ENCODE measurements at regions of chr19 and their contacts with region 1.

Region 1: GRCh38 chr19:10194500-10195289 is at the start of gene DNMT1:
- DNase-seq: peak; percentile 95
- H3K4me3 ChIP-seq: peak within 1 kb of the TSS; percentile 86 to 96 (median 94)
- H3K27ac ChIP-seq: peak within 1 kb of the TSS; percentile 70
- H3K4me1 ChIP-seq: peaks cover 7% of the 10 kb centered on the region
- H3K27me3 ChIP-seq: no peaks in the 10 kb centered on the region
- CTCF ChIP-seq: no peak
- total RNA-seq, gene DNMT1: 23.0 to 139 TPM

Region 2: DNA sequence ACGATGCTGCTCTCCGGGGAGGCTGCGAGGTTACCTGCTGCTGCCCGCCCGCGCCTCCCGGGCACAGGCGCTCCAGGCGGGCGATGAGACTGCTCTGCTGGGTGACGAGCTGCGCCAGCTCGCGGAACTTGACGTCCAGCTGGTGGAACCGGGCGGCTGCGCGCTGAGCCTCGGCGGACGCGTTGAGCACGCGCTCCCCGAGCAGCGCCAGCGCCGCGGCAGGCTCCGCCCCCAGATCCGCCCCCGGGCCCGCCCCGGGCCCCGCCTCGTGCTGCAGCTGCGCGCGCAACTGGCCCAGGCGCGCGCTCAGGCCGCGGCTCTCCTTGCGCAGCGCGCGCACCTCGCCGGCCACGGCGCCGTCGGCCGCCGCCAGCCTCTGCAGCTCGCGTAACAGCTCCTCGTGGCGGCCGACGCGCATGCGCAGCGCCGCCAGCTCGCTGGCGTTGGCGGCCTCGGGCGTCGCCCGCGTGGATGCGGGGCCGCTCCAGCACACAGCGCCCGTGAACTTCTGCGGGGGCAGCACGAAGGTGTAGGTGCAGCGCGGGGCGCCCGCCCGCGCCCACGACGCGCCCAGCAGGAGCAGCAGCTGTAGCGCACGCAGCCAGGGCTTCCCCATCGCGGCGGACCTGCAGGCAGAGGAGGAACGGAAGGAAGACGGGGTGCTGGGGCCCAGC is 98.6 kb before region 1 on chr19:
- CTCF ChIA-PET with region 1: no interaction called
- dilution Hi-C with region 1: no loop called
- in situ Hi-C with region 1: no loop called
- intact Hi-C with region 1: no loop called
- DNase-seq: peak; percentile 87
- H3K4me3 ChIP-seq: peak overlapping the region; percentile 43 to 55 (median 53)
- H3K27ac ChIP-seq: peak overlapping the region; percentile 3
- H3K4me1 ChIP-seq: peaks cover 13% of the 10 kb centered on the region
- H3K27me3 ChIP-seq: no peaks in the 10 kb centered on the region
- CTCF ChIP-seq: no peak

Region 3: DNA sequence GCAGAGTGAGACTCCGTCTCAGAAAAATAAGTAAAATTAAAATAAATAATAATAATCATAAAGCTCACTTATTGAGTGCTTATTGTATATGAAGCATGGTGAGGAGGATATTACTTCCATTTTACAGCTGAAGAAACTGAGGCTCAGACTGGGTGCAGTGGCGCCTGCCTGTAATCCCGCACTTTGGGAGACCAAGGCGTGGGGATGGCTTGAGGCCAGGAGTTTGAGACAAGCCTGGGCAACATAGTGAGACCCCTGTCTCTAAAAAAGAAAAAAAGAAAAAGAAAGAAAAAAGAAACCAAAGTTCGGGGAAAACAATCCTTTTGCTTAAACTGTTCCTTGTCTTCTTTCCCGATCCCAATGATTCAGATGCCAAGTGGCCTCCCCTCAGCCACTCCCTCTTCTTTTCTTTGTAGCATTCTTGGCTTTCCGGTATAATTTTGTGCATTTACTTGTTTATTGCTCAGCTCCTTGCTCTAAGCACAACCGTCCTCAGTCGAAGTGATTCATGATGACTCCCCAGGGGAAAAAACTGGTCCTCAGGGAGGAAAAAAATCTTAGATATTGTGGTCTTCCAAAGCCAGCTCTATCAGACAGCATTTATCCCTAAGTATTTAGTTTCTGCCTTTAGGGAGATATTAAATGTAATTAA is 74.0 kb before region 1 on chr19:
- CTCF ChIA-PET with region 1: no interaction called
- dilution Hi-C with region 1: no loop called
- in situ Hi-C with region 1: no loop called
- intact Hi-C with region 1: no loop called
- DNase-seq: peak; percentile 88
- H3K4me3 ChIP-seq: no peak overlapping the region
- H3K27ac ChIP-seq: no peak overlapping the region
- H3K4me1 ChIP-seq: peaks cover 5% of the 10 kb centered on the region
- H3K27me3 ChIP-seq: no peaks in the 10 kb centered on the region
- CTCF ChIP-seq: no peak

Region 4: DNA sequence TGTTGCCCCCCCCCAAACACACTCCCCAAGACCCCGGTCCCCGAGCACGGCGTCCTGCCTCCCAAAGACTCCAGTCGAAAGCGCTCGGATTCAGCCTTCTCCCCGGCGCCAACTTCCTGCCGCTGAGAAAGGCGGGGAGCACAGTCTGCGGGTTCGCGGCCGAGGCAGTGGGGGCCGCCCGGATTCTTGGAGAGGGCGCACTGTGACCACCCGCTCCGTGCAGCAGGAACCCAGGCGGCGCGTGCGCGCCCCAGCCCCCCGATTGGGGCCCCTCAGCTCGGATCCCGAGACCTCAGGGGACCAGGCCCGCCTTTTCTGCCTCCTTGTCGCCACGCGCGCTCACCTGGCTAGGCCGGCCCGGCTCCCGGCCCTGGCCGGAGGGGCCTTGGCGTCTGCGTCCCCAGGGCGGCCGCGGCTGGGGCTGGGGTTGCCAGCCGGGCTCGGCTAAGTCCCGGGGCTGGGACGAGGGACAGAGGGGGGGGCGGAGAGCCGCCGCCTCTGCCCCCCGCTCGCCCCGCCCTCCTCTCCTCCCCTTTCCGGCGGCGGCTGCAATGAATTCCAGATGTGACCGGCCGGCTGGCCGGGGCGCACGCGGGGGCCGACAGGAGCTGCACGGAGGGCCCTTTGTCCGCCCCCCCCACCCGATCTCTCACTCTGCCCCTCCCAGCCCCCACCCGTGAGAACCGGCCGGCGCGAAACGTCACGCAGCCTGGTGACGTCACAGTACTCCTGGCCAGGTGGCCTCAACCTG is 36.3 kb after region 1 on chr19 and contains the start of gene S1PR2:
- CTCF ChIA-PET with region 1: no interaction called
- dilution Hi-C with region 1: no loop called
- in situ Hi-C with region 1: no loop called
- intact Hi-C with region 1: loop called (anchors 2 kb)
- DNase-seq: peak; percentile 57
- H3K4me3 ChIP-seq: peak within 1 kb of the TSS; percentile 71 to 99 (median 84)
- H3K27ac ChIP-seq: peak within 1 kb of the TSS; percentile 70
- H3K4me1 ChIP-seq: peaks cover 17% of the 10 kb centered on the region
- H3K27me3 ChIP-seq: no peaks in the 10 kb centered on the region
- CTCF ChIP-seq: no peak
- total RNA-seq, gene S1PR2: 5.6 to 15.3 TPM

Measured in mammary epithelial cell (primary cell).